Cardiac septum (tissue), 1 donor: ENCODE measurements at regions of chr5 and their contacts with region 1.

Region 1: GRCh38 chr5:38441453-38442246 is 114.8 kb downstream of the LIFR start:
- DNase-seq: peak; percentile 91

Region 2: GRCh38 chr5:38556599-38557305 is 115.1 kb after region 1 on chr5 and contains the start of gene LIFR:
- intact Hi-C with region 1: loop called (anchors 5 kb)
- DNase-seq: peak; percentile 88
- total RNA-seq, gene LIFR: 30.9 TPM

Region 3: GRCh38 chr5:38666668-38667498 is 225.2 kb after region 1 on chr5:
- intact Hi-C with region 1: loop called (anchors 1 kb)
- DNase-seq: no peak

Region 4: GRCh38 chr5:38922199-38922598 is 480.5 kb after region 1 on chr5:
- intact Hi-C with region 1: loop called (anchors 10 kb)
- DNase-seq: peak; percentile 78